Left ventricle myocardium superior (tissue), 1 donor: ENCODE measurements at regions of chr5 and their contacts with region 1.

Region 1: GRCh38 chr5:6704361-6704851 is 8.8 kb upstream of the TENT4A start:
- DNase-seq: peak; percentile 85
- ATAC-seq: peak; percentile 97

Region 2: GRCh38 chr5:6188344-6188743 is 516.1 kb before region 1 on chr5:
- intact Hi-C with region 1: no loop called
- DNase-seq: no peak
- ATAC-seq: no peak

Region 3: DNA sequence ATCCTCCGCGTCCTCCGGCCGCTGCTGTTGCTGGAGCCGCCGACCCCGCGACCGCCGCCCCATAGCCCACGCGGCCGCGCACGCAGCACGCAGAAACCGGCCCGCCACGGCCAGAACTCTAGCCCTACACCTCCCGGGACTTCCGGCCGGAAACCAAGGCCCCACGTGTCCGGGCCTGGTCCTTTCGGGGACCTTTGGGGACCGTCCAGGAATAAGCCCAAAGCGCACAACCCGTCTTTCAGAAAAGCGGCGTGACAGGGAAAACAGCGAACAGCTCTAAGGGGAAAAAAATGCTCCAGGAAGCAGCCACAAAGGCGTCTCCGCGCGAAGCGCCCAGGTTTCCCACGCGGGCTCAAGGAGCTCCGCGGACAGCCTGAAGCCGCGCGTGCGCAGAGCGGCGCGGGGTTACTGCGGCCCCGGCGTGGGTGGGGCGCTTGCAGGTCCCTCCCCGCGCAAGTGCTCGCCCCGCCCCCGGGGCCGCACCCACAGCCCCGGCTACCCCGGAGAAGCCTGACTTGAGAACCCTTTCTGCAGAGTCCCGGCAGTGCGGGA is 71.4 kb before region 1 on chr5 and contains the starts of genes NSUN2 and SRD5A1:
- intact Hi-C with region 1: loop called (anchors 10 kb)
- DNase-seq: peak; percentile 96
- ATAC-seq: peak; percentile 99
- total RNA-seq, gene NSUN2: 33.5 TPM
- total RNA-seq, gene SRD5A1: 2.3 TPM

Region 4: GRCh38 chr5:6900247-6901227 is 196.1 kb after region 1 on chr5:
- intact Hi-C with region 1: no loop called
- DNase-seq: no peak
- ATAC-seq: no peak